IMR-90 (cell line): ENCODE measurements at regions of chr11 and their contacts with region 1.

Region 1: DNA sequence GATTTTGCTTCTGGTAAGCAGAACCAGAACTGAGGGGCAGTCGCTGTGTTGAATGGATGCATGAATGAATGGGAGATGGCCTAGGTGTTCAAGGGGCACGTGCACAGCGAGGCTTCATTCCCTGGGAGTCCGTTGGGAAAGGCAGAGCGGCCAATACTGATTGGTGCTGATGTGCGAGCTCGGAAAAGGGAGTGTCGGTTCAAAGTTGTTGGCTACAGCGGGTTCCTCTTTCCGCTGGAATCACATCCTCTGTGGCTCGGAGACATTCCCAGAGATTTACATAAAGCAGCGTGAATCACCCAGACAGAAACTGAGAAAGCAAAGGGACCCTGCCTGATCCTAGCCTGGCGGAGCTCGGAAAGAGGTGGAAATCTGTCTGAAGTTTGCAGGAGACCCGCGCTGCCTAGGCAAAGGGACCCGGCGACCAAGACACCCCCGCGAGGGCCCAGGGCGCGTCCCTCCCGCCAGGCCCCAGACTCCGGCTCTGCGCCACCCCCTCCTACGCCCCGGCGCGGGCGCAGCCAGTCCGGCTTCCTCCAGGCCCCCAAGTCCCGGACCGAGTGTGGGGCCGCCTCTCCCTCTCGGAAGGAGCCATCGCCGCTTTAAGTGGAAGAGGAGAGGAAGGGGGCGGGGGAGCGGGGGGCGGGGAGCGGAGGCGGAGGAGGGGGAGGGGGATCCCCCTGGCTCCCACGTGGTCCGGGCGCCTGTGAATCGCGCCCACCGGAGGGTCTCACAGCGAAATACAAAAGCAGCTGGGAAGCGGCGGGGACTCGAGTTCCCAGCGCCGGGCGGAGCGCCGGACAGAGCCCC is at the start of gene FJX1:
- DNase-seq: peak; percentile 95
- ATAC-seq: peak; percentile 68
- H3K4me3 ChIP-seq: peak within 1 kb of the TSS; percentile 67
- H3K27ac ChIP-seq: peak within 1 kb of the TSS; percentile 90
- H3K4me1 ChIP-seq: peaks cover 9% of the 10 kb centered on the region
- H3K27me3 ChIP-seq: no peaks in the 10 kb centered on the region
- CTCF ChIP-seq: no peak
- POLR2A ChIP-seq: peak; percentile 79
- RAD21 ChIP-seq: peak; percentile 26; the same call in 1 of the 2 replicates
- total RNA-seq, gene FJX1: 8.1 and 8.4 TPM in 2 replicates

Region 2: GRCh38 chr11:35404388-35404775 is 213.5 kb before region 1 on chr11:
- CTCF ChIA-PET with region 1: no interaction called
- POLR2A ChIA-PET with region 1: no interaction called
- dilution Hi-C with region 1: no loop called
- in situ Hi-C with region 1: no loop called
- intact Hi-C with region 1: no loop called
- DNase-seq: peak; percentile 38
- ATAC-seq: peak; percentile 73
- H3K4me3 ChIP-seq: no peak overlapping the region
- H3K27ac ChIP-seq: no peak overlapping the region
- H3K4me1 ChIP-seq: peaks cover 14% of the 10 kb centered on the region
- H3K27me3 ChIP-seq: no peaks in the 10 kb centered on the region
- CTCF ChIP-seq: peak; percentile 49
- POLR2A ChIP-seq: no peak
- RAD21 ChIP-seq: peak; percentile 58

Region 3: DNA sequence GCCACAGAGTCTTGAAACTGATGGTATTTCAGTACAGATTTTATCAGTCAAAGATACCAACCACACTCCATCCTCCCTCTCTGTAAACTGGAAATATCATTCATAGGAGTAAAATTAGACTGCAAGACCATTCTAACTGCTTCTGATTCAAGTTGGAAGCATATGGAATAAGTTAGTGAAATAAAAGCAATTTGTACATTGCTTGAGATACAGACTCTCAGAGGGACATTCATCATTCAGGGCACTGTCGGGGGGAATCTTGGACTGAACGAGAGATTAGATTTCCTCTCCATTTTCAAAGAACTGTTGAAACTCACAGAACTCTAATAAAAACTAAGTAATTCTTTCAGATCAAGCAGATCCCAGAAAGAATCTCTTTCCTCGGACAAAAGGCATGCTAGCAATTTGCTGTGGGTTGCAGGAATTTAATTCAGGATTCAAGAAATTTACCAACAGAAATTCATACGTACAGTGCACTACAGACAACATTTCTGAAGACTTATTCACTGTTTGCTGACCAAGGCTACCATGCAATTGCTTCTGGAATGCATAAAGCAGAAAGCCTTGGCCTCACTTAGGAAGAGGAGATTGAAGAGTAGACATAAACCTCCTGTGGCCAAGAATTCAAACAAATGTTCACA is 126.5 kb before region 1 on chr11:
- CTCF ChIA-PET with region 1: interaction called, 3 read pairs
- POLR2A ChIA-PET with region 1: interaction called, 3 read pairs
- dilution Hi-C with region 1: no loop called
- in situ Hi-C with region 1: no loop called
- intact Hi-C with region 1: loop called (anchors 1 kb)
- DNase-seq: peak; percentile 96
- ATAC-seq: peak; percentile 93
- H3K4me3 ChIP-seq: no peak overlapping the region
- H3K27ac ChIP-seq: peak overlapping the region; percentile 81; the same call in 1 of the 2 replicates
- H3K4me1 ChIP-seq: peaks cover 17% of the 10 kb centered on the region
- H3K27me3 ChIP-seq: no peaks in the 10 kb centered on the region
- CTCF ChIP-seq: no peak
- POLR2A ChIP-seq: no peak
- RAD21 ChIP-seq: no peak; the same call in 1 of the 2 replicates

Region 4: GRCh38 chr11:35721651-35722282 is 103.9 kb after region 1 on chr11:
- CTCF ChIA-PET with region 1: no interaction called
- POLR2A ChIA-PET with region 1: no interaction called
- dilution Hi-C with region 1: no loop called
- in situ Hi-C with region 1: no loop called
- intact Hi-C with region 1: loop called (anchors 10 kb)
- DNase-seq: peak; percentile 25
- ATAC-seq: no peak
- H3K4me3 ChIP-seq: no peak overlapping the region
- H3K27ac ChIP-seq: no peak overlapping the region
- H3K4me1 ChIP-seq: no peaks in the 10 kb centered on the region
- H3K27me3 ChIP-seq: no peaks in the 10 kb centered on the region
- CTCF ChIP-seq: no peak
- POLR2A ChIP-seq: no peak
- RAD21 ChIP-seq: no peak

Region 5: GRCh38 chr11:35943713-35944655 is 326.1 kb after region 1 on chr11 and contains the start of gene LDLRAD3:
- CTCF ChIA-PET with region 1: no interaction called
- POLR2A ChIA-PET with region 1: no interaction called
- dilution Hi-C with region 1: no loop called
- in situ Hi-C with region 1: no loop called
- intact Hi-C with region 1: loop called (anchors 5 kb)
- DNase-seq: peak; percentile 82
- ATAC-seq: peak; percentile 94
- H3K4me3 ChIP-seq: peak within 1 kb of the TSS; percentile 71
- H3K27ac ChIP-seq: peak within 1 kb of the TSS; percentile 91
- H3K4me1 ChIP-seq: peaks cover 4% of the 10 kb centered on the region; the same call in 1 of the 2 replicates
- H3K27me3 ChIP-seq: peaks cover 8% of the 10 kb centered on the region
- CTCF ChIP-seq: no peak
- POLR2A ChIP-seq: peak; percentile 17; the same call in 1 of the 2 replicates
- RAD21 ChIP-seq: no peak
- total RNA-seq, gene LDLRAD3: 2.7 and 3.6 TPM in 2 replicates

Region 6: DNA sequence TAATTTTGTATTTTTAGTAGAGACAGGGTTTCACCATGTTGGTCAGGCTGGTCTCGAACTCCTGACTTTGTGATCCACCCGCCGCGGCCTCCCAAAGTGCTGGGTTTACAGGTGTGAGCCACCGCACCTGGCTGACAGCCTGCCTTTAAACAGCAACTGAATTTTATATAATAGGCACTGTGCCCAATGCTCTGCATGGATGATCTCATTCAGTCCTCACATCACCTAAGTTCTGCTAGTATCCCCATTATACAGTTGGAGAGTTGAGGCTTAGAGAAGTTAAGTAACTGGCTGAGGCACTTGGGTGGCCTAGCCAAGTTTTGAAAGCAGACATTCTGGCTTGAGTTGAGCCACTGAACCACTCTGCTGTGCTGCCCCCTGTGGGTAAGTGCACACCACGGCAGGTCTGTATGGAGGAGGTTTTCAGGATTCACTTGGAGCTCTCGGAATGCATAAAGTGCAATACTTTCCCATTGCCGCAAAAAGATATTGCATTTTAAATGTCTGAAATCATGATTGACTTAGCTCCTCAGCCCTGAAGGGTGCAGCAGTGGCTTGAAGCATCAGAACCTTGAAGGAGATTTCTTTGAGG is 438.4 kb after region 1 on chr11:
- CTCF ChIA-PET with region 1: no interaction called
- POLR2A ChIA-PET with region 1: no interaction called
- dilution Hi-C with region 1: no loop called
- in situ Hi-C with region 1: no loop called
- intact Hi-C with region 1: no loop called
- DNase-seq: peak; percentile 40
- ATAC-seq: 0 out of 2 replicates have a peak, but pooled peaks have one; percentile 17
- H3K4me3 ChIP-seq: no peak overlapping the region
- H3K27ac ChIP-seq: no peak overlapping the region
- H3K4me1 ChIP-seq: peaks cover 2% of the 10 kb centered on the region; the same call in 1 of the 2 replicates
- H3K27me3 ChIP-seq: 0 out of 2 replicates have a peak, but pooled peaks cover 2% of the 10 kb centered on the region
- CTCF ChIP-seq: peak; percentile 44
- POLR2A ChIP-seq: no peak
- RAD21 ChIP-seq: peak; percentile 62

Region 7: GRCh38 chr11:36149538-36150242 is 531.8 kb after region 1 on chr11:
- CTCF ChIA-PET with region 1: no interaction called
- POLR2A ChIA-PET with region 1: no interaction called
- dilution Hi-C with region 1: no loop called
- in situ Hi-C with region 1: no loop called
- intact Hi-C with region 1: loop called (anchors 5 kb)
- DNase-seq: peak; percentile 100
- ATAC-seq: peak; percentile 96
- H3K4me3 ChIP-seq: no peak overlapping the region
- H3K27ac ChIP-seq: peak overlapping the region; percentile 76
- H3K4me1 ChIP-seq: peaks cover 10% of the 10 kb centered on the region
- H3K27me3 ChIP-seq: no peaks in the 10 kb centered on the region
- CTCF ChIP-seq: peak; percentile 66
- POLR2A ChIP-seq: no peak
- RAD21 ChIP-seq: peak; percentile 75

Region 8: DNA sequence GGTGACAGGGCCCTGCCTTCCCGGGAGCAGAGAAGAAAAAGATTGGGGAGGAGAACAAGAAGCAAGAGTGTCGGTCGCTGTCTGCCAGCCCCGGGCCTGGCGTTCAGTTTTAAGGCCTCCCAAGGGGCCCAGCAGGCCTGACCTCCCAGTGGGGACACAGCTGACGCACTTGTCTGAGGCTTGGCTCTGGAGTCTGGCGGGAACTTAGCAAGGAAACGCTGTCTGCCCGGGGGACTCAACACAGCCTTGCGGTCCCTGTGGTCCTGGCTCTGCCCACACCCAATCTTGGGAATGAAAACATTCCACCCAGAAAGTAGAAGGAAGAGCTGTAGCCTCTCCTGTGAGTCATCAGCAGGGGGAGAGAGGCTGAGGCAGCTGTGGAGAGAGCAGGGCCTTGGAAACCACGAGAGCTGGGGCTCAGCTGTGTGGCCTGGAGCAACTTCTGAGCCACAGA is 837.8 kb after region 1 on chr11:
- CTCF ChIA-PET with region 1: no interaction called
- POLR2A ChIA-PET with region 1: no interaction called
- dilution Hi-C with region 1: no loop called
- in situ Hi-C with region 1: loop called (anchors 25 kb)
- intact Hi-C with region 1: no loop called
- DNase-seq: peak; percentile 98
- ATAC-seq: peak; percentile 96
- H3K4me3 ChIP-seq: no peak overlapping the region
- H3K27ac ChIP-seq: peak overlapping the region; percentile 95
- H3K4me1 ChIP-seq: peaks cover 34% of the 10 kb centered on the region
- H3K27me3 ChIP-seq: no peaks in the 10 kb centered on the region
- CTCF ChIP-seq: no peak
- POLR2A ChIP-seq: peak; percentile 58
- RAD21 ChIP-seq: peak; percentile 38